ENCODE measurements at regions of chr3 and their contacts with region 1.

Region 1: DNA sequence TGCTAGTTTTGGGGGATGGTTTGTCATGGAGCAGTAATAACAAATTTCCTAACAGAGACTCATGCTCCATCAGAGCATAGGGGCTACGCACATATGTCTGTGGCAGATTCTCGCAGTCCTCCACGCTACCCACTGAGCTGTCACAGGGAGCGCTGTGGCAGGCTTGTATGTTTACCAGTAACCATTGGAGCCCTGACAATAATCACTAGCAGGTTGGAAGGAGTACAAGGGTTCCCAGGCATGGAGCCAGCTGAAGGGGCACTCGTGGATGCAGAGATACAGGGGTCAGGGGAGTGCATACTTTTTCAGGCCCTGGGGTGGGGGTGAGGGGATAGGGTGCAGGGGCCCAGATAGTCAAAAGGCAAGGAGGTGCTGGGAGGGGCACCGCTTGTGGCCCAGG is 7.9 kb upstream of the GP9 start:
- DNase-seq: no peak
- H3K4me3 ChIP-seq: no peak overlapping the region
- H3K4me3 Mint-ChIP-seq: no peak overlapping the region
- H3K27ac ChIP-seq: no peak overlapping the region
- H3K27ac Mint-ChIP-seq: peak overlapping the region in 3 of 7 donors; percentile 33 to 80 (median 52)
- H3K4me1 ChIP-seq: peaks cover 5% of the 10 kb centered on the region
- H3K4me1 Mint-ChIP-seq: peaks cover 6 to 8% (median 7%) of the 10 kb centered on the region in 4 donors
- H3K27me3 ChIP-seq: no peaks in the 10 kb centered on the region
- H3K27me3 Mint-ChIP-seq: no peaks in the 10 kb centered on the region

Region 2: DNA sequence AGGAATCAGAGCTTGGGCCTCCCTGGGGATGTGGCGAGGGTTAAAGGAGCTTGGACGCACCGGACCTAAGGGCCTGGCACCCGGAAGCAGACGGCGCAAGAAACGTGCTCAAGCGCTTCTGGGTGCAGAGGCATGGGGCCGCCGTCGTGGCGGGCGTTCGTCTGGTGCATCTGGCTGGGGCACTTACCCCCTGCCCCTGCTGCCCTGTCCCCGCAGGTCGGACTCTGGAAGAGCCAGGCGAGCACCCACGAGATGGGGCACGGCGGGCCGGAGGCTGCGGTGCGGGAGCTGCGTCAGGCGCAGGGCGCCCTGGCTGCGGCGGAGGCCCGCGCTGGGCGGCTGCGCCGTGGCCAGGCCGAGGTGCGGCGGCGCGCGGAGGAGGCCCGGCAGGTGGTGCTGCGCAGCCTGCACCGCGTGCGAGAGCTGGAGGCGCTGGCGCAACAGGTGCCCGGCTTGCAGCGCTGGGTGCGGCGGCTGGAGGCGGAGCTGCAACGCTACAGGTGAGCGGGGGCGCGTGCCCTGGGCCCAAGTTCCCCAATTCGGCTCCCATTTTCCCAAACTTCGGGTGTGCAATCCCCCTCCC is 49.0 kb before region 1 on chr3:
- CTCF ChIA-PET with region 1: interaction called, 23 read pairs
- POLR2A ChIA-PET with region 1: interaction called, 5 read pairs
- intact Hi-C with region 1: loop called (anchors 2 kb)
- DNase-seq: peak; percentile 50 to 64 (median 57)
- H3K4me3 ChIP-seq: no peak overlapping the region
- H3K4me3 Mint-ChIP-seq: peak overlapping the region in 4 of 8 donors; percentile 59 to 73 (median 64)
- H3K27ac ChIP-seq: no peak overlapping the region
- H3K27ac Mint-ChIP-seq: peak overlapping the region in 1 of 7 donors; percentile 47
- H3K4me1 ChIP-seq: peaks cover 36% of the 10 kb centered on the region
- H3K4me1 Mint-ChIP-seq: peaks cover 20 to 47% (median 32%) of the 10 kb centered on the region in 4 donors
- H3K27me3 ChIP-seq: peaks cover 25% of the 10 kb centered on the region
- H3K27me3 Mint-ChIP-seq: peaks cover 22 to 27% of the 10 kb centered on the region in 2 donors

Region 3: DNA sequence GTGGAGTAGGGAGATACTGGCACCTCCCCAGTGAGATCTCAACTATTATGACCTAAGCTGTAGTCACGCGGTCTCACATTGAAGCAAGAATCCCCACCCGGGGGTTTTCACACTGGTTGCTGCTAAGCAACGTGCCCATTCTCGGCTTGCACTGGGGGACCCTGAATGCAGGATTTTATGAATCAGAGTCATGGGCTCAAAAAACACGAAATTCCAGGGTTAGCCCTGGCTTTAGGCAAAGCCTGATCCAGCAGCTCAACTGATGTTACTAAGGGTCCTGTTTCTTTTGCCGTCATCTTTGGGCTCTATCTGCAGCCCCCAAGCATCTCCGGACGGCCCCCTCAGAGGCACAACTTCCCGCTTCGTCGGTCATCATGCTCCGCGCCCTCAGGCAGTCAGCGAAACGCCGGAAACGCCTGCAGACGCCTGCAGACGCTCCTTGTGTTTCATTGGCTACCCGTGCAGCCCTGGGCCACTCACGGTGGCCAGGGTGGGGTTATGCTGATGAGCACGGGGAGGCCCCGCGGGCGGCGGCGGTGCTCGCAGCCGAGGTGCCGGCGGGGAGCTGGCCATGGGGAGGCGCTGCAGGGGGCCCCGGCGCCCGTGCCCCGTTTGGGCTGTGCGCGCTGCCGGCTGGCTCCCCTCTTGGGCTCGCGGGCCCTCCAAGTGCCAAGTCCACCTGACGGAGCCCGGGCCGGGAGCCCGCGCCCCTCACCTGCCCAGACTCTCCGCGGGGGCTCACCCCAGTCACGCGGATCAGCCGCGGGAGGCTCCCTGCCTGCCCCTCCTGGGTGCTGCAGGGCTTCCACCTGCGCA is 25.7 kb before region 1 on chr3:
- CTCF ChIA-PET with region 1: interaction called, 25 read pairs
- POLR2A ChIA-PET with region 1: interaction called, 8 read pairs
- intact Hi-C with region 1: no loop called
- DNase-seq: peak; percentile 91 to 95 (median 94)
- H3K4me3 ChIP-seq: peak overlapping the region; percentile 42 to 57
- H3K4me3 Mint-ChIP-seq: peak overlapping the region; percentile 76 to 88 (median 85)
- H3K27ac ChIP-seq: peak overlapping the region; percentile 55
- H3K27ac Mint-ChIP-seq: peak overlapping the region; percentile 91 to 97 (median 97)
- H3K4me1 ChIP-seq: peaks cover 16% of the 10 kb centered on the region
- H3K4me1 Mint-ChIP-seq: peaks cover 10 to 25% (median 16%) of the 10 kb centered on the region in 4 donors
- H3K27me3 ChIP-seq: no peaks in the 10 kb centered on the region
- H3K27me3 Mint-ChIP-seq: no peaks in the 10 kb centered on the region

Region 4: DNA sequence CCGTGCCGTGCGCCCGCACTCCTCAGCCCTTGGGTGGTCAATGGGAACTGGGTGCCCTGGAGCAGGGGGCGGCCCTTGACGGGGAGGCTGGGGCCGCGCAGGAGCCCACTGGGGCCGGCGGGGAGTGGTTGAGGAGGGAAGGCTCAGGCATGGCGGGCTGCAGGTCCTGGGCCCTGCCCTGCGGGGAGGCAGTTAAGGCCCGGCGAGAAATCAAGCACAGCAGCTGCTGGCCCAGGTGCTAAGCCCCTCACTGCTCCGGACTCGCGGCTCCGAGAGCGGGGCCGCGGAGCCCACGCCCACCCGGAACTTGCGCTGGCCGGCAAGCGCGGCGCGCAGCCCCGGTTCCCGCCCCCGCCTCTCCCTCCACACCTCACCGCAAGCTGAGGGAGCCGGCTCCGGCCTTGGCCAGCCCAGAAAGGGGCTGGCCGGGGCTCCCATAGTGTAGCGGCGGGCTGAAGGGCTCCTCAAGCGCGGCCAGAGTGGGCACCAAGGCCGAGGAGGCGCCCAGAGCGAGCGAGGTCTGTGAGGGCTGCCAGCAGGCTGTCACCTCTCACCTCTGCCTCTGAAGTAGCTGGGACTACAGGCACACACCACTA is 15.7 kb after region 1 on chr3:
- CTCF ChIA-PET with region 1: interaction called, 47 read pairs
- POLR2A ChIA-PET with region 1: interaction called, 8 read pairs
- intact Hi-C with region 1: no loop called
- DNase-seq: no peak
- H3K4me3 ChIP-seq: no peak overlapping the region
- H3K4me3 Mint-ChIP-seq: peak overlapping the region; percentile 40 to 79 (median 68)
- H3K27ac ChIP-seq: no peak overlapping the region
- H3K27ac Mint-ChIP-seq: no peak overlapping the region
- H3K4me1 ChIP-seq: no peaks in the 10 kb centered on the region
- H3K4me1 Mint-ChIP-seq: peaks cover 0 to 5% (median 3%) of the 10 kb centered on the region in 4 donors
- H3K27me3 ChIP-seq: no peaks in the 10 kb centered on the region
- H3K27me3 Mint-ChIP-seq: peaks cover 3 to 10% of the 10 kb centered on the region in 2 donors

Region 5: DNA sequence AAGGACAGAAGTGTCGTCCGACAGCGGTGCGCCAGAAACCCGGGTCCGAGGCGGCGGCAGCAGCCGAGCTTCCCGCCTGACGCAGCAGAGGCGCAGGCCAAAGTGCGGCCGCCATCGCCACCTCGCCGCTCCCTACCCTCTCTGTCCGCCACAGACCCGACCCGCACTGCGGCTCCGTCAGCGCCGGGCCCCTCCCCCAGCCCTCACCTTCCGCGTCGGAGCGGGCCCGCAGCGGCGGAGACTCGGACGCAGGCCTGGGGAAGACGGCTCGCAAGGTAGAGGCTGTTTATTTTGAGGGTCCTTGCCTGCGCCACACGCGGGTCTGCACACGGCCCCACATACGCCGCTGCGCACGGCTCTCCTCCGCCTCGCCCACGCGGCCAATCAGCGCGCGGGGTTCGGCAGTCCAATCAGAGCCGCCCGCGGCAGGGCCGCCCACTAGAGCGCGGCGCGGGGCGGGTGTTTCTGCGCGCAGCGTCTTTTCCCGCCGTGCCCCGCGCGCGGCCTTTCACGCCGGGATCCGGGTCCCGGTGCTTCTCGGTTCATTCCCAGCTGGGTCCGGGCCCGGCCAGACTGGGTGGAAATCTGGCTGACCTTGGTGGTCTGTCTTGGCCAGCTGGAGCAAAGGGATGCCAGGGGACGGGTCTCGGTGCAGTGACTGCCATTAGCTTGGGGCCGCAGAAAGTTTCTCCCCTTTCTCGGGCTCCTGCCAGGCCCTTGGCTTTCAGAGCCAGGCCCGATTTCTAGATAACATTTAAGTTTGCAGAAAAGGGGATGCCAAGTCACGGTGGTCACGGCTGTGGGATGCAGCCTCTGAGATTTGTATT is 131.1 kb after region 1 on chr3 and contains the start of gene CNBP:
- CTCF ChIA-PET with region 1: interaction called, 12 read pairs
- POLR2A ChIA-PET with region 1: interaction called, 5 read pairs
- intact Hi-C with region 1: no loop called
- DNase-seq: peak; percentile 90 to 95 (median 93)
- H3K4me3 ChIP-seq: peak within 1 kb of the TSS; percentile 51 to 93
- H3K4me3 Mint-ChIP-seq: peak within 1 kb of the TSS; percentile 89 to 99 (median 97)
- H3K27ac ChIP-seq: peak within 1 kb of the TSS; percentile 99
- H3K27ac Mint-ChIP-seq: peak within 1 kb of the TSS; percentile 91 to 99 (median 98)
- H3K4me1 ChIP-seq: peaks cover 41% of the 10 kb centered on the region
- H3K4me1 Mint-ChIP-seq: peaks cover 20 to 55% (median 31%) of the 10 kb centered on the region in 4 donors
- H3K27me3 ChIP-seq: no peaks in the 10 kb centered on the region
- H3K27me3 Mint-ChIP-seq: no peaks in the 10 kb centered on the region
- total RNA-seq, gene CNBP: 369 to 400 TPM